PC-9 (cell line): ENCODE measurements at regions of chr2 and their contacts with region 1.

Region 1: DNA sequence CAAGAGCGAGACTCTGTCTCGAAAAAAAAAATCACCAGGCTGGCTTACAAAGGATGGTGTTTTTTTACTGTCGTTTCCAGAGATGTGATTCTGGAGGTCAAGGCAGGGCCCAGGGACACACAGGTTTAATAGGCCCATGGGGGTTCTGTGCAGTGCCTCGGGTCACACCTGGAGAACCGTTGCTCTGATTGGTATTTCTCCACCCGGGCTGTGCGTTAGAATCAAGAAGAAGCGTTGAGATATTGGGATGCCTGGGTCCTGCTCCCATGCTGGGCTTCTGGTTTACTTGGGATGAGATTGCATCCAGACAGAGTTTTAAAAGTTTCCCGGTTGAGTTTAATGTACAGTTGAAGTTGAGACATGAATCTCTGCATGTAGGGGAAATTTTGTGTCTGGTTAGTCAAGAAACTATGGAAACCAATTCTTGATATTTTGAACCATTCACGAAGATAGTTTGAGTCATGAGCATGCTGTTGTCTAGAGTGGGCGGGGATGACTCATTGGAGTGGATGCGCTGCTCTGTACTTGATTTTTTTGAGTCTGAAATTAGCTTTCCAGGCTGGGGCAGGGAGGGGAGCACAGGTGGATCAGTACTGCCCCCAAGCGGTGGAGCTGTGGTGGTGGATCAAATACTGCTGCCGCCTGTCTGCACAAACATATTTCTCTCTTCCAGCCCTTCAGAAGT is 50.1 kb downstream of the GREB1 start:
- DNase-seq: peak; percentile 66 to 72
- H3K4me3 ChIP-seq: no peak overlapping the region
- H3K27ac ChIP-seq: no peak overlapping the region
- H3K4me1 ChIP-seq: no peaks in the 10 kb centered on the region
- H3K27me3 ChIP-seq: peaks cover 51% of the 10 kb centered on the region
- CTCF ChIP-seq: peak; percentile 95

Region 2: GRCh38 chr2:10832203-10832936 is 751.6 kb before region 1 on chr2:
- CTCF ChIA-PET with region 1: no interaction called
- POLR2A ChIA-PET with region 1: no interaction called
- intact Hi-C with region 1: loop called (anchors 2 kb)
- DNase-seq: peak; percentile 69 to 82
- H3K4me3 ChIP-seq: no peak overlapping the region
- H3K27ac ChIP-seq: no peak overlapping the region
- H3K4me1 ChIP-seq: no peaks in the 10 kb centered on the region
- H3K27me3 ChIP-seq: peaks cover 32% of the 10 kb centered on the region
- CTCF ChIP-seq: peak; percentile 98

Region 3: GRCh38 chr2:11446733-11447248 is 137.2 kb before region 1 on chr2:
- CTCF ChIA-PET with region 1: no interaction called
- POLR2A ChIA-PET with region 1: no interaction called
- intact Hi-C with region 1: loop called (anchors 1 kb)
- DNase-seq: peak in 1 of 2 experiments; percentile 23
- H3K4me3 ChIP-seq: no peak overlapping the region
- H3K27ac ChIP-seq: no peak overlapping the region
- H3K4me1 ChIP-seq: no peaks in the 10 kb centered on the region
- H3K27me3 ChIP-seq: no peaks in the 10 kb centered on the region
- CTCF ChIP-seq: peak; percentile 92

Region 4: GRCh38 chr2:11477994-11478393 is 106.0 kb before region 1 on chr2:
- CTCF ChIA-PET with region 1: interaction called, 4 read pairs
- POLR2A ChIA-PET with region 1: no interaction called
- intact Hi-C with region 1: loop called (anchors 1 kb)
- DNase-seq: peak; percentile 53 to 72
- H3K4me3 ChIP-seq: no peak overlapping the region
- H3K27ac ChIP-seq: no peak overlapping the region
- H3K4me1 ChIP-seq: no peaks in the 10 kb centered on the region
- H3K27me3 ChIP-seq: no peaks in the 10 kb centered on the region
- CTCF ChIP-seq: peak; percentile 97

Region 5: GRCh38 chr2:11778923-11779757 is 195.2 kb after region 1 on chr2:
- CTCF ChIA-PET with region 1: no interaction called
- POLR2A ChIA-PET with region 1: no interaction called
- intact Hi-C with region 1: loop called (anchors 5 kb)
- DNase-seq: peak; percentile 54 to 68
- H3K4me3 ChIP-seq: no peak overlapping the region
- H3K27ac ChIP-seq: no peak overlapping the region
- H3K4me1 ChIP-seq: peaks cover 7% of the 10 kb centered on the region; the same call in 1 of the 2 replicates
- H3K27me3 ChIP-seq: no peaks in the 10 kb centered on the region
- CTCF ChIP-seq: peak; percentile 100